Activated naive CD4-positive, alpha-beta T cell treated with anti-CD3 and anti-CD28 coated beads for 36 hours (primary cell): ENCODE measurements at regions of chr10 and their contacts with region 1.

Region 1: DNA sequence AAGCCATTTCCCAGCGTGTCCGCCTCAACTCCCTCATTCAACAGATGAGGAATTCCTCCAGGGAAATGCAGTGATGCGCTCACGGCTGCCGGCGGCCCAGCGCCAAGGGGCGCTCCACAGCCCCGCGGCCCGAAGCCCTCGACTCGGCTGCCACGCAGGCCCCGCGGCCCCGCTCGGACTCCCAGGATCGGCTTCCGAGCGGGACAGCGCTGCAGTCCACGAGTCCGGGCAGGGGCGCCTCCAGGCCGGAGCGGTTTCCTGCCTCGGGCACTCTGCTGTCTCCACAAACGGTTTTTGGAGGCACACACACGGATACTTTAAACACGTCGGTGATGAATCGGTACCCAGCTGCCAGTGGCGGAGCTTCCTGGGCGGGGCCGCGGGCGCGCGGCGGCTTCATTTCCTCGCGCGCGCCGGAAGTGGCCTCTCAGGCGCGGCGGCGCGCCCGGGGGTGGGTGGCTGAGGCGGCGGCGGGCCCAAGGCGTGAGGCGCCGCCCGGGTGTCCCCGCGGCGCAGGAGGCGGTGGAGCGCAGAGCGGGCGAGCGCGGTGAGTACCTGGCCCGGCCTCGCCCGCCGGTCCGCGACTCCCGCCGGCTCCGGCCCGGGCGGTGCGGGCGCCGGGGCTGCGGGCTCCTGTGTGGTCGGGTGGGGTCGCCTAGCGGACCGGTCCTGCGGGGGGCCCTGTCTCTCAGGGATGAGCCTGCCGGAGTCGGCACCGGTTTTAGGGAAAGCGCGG is at the start of gene CSGALNACT2:
- DNase-seq: peak; percentile 88
- H3K4me3 Mint-ChIP-seq: peak within 1 kb of the TSS; percentile 97
- H3K27ac Mint-ChIP-seq: peak within 1 kb of the TSS; percentile 99
- H3K4me1 Mint-ChIP-seq: peaks cover 51% of the 10 kb centered on the region
- H3K27me3 Mint-ChIP-seq: no peaks in the 10 kb centered on the region
- total RNA-seq, gene CSGALNACT2: 25.6 to 27.1 TPM

Region 2: GRCh38 chr10:42552493-42553407 is 585.4 kb before region 1 on chr10:
- CTCF ChIA-PET with region 1: no interaction called
- intact Hi-C with region 1: loop called (anchors 1 kb)
- DNase-seq: peak; percentile 97
- H3K4me3 Mint-ChIP-seq: peak overlapping the region; percentile 87
- H3K27ac Mint-ChIP-seq: peak overlapping the region; percentile 92
- H3K4me1 Mint-ChIP-seq: peaks cover 33% of the 10 kb centered on the region
- H3K27me3 Mint-ChIP-seq: no peaks in the 10 kb centered on the region

Region 3: GRCh38 chr10:43120929-43121314 is 17.3 kb before region 1 on chr10:
- CTCF ChIA-PET with region 1: interaction called, 4 read pairs
- intact Hi-C with region 1: loop called (anchors 1 kb)
- DNase-seq: peak; percentile 91
- H3K4me3 Mint-ChIP-seq: no peak overlapping the region
- H3K27ac Mint-ChIP-seq: peak overlapping the region; percentile 77
- H3K4me1 Mint-ChIP-seq: peaks cover 16% of the 10 kb centered on the region
- H3K27me3 Mint-ChIP-seq: no peaks in the 10 kb centered on the region

Region 4: DNA sequence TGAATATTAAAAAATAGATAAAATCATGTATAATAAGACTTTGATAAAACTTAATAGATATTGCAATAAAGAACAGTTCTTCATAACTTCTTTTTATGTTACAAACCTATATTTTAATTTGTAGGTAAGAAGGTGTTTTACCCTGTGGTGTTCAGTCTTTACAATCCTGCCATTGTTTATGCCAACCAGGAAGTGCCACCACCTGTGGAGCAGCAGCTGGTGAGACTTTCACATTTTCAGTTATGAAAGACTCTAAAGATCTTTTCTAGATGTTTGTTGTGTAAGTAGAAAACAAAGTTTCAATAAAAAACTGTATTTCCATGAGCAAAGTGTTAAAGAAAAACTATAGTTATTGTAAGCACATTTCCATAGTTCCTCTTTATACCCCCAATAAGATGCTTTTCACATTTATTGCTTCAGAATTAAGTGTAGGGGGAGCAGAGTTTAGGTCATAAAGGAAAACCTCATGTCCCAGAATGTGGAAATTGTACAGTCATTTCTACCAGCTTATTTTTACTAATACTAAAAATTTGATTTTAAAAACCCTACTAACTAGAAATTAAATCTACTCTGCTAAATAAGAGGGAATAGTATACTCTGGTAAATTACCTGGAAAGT is 28.8 kb after region 1 on chr10:
- CTCF ChIA-PET with region 1: no interaction called
- intact Hi-C with region 1: loop called (anchors 1 kb)
- DNase-seq: peak; percentile 18
- H3K4me3 Mint-ChIP-seq: no peak overlapping the region
- H3K27ac Mint-ChIP-seq: no peak overlapping the region
- H3K4me1 Mint-ChIP-seq: peaks cover 17% of the 10 kb centered on the region
- H3K27me3 Mint-ChIP-seq: no peaks in the 10 kb centered on the region

Region 5: DNA sequence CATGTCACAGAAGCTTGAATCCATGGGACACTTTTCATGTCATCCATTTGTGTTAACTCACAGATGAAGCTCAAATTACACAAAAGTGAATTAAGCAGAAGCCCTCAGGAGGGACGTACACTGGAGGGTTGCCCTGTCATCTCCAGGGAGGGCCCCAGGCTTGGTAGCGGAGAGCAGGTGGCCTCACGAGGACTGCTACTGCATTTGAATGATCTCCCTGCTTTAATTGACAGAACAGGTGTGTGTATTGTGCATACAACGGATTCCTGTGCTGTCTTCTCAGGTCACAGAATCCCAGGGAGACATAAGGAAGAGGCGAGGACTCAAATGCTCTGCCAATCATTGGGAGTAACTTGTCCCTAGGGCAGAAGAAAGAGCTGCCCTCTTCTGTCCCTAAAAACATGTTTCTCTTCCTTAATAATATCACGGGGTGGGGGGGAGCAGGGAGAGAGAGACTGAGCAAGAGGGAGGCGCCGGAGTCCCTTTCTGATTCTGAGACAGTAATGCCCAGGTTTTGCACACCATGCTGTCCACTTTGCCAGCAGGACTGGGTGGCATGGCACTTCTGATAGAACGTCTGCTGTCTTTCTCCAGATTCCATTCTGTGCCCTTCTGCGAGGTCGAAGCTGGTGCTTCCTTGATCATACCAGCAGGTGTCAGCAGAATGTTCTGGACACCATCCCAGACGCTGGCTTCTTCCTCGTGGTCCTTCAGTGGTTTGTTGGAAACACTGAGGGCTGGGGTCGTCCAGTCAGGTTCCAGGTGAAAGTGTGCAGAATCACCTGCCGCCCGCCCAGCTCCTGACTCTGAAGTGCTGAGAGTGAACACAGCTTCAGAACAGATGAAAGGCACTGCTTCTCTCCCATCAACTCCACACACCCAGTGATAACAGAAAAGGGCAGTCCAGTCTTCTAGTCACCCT is 154.8 kb after region 1 on chr10:
- CTCF ChIA-PET with region 1: no interaction called
- intact Hi-C with region 1: loop called (anchors 5 kb)
- DNase-seq: peak; percentile 65
- H3K4me3 Mint-ChIP-seq: no peak overlapping the region
- H3K27ac Mint-ChIP-seq: no peak overlapping the region
- H3K4me1 Mint-ChIP-seq: peaks cover 28% of the 10 kb centered on the region
- H3K27me3 Mint-ChIP-seq: peaks cover 2% of the 10 kb centered on the region

Region 6: DNA sequence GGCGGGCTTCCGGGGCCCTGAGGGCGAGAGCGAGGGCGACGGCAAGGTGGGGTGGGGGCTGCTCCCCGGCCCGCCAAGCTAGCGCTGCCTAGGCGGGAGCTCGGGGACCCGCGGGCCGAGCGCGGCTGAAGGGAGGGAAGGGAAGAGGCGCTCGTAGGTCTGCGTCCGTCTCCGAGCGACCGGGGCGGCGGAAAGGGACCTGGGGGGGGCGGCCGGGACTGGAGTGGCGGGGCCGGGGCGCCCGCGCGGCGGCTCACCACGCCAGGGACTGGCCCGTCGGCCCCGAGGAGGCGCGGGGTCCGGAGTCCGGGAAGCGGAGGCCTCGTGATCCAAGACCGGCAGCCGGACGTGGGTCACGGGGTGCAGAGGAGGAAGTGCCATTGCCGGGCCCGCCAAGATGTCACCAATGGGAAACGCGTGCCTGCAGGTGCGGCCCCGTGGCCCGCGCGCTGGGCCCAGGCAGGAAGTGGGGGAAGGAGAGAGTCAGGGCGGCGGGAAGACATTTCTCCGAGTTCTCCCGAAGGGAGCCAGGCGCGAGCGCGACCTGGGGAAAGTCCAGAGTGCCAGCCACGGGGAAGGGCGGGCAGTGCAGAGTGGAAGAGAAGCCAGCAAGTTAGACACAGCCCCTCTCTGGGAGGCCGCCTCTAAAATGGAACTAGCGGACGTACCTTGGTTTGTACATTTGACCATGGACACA is 258.9 kb after region 1 on chr10:
- CTCF ChIA-PET with region 1: no interaction called
- intact Hi-C with region 1: loop called (anchors 2 kb)
- DNase-seq: peak; percentile 93
- H3K4me3 Mint-ChIP-seq: peak overlapping the region; percentile 89
- H3K27ac Mint-ChIP-seq: peak overlapping the region; percentile 99
- H3K4me1 Mint-ChIP-seq: peaks cover 75% of the 10 kb centered on the region
- H3K27me3 Mint-ChIP-seq: no peaks in the 10 kb centered on the region